A549 (cell line): ENCODE measurements at regions of chr6 and their contacts with region 1.

Region 1: GRCh38 chr6:43506667-43507471 is 3.3 kb downstream of the LRRC73 start:
- DNase-seq: peak; percentile 55 to 83
- ATAC-seq: peak; percentile 62 to 83
- H3K4me3 ChIP-seq: no peak overlapping the region
- H3K27ac ChIP-seq: no peak overlapping the region
- H3K4me1 ChIP-seq: peaks cover 9% of the 10 kb centered on the region
- CTCF ChIP-seq: peak; percentile 79
- EP300 ChIP-seq: no peak
- POLR2A ChIP-seq: no peak
- RAD21 ChIP-seq: peak; percentile 72 to 84

Region 2: DNA sequence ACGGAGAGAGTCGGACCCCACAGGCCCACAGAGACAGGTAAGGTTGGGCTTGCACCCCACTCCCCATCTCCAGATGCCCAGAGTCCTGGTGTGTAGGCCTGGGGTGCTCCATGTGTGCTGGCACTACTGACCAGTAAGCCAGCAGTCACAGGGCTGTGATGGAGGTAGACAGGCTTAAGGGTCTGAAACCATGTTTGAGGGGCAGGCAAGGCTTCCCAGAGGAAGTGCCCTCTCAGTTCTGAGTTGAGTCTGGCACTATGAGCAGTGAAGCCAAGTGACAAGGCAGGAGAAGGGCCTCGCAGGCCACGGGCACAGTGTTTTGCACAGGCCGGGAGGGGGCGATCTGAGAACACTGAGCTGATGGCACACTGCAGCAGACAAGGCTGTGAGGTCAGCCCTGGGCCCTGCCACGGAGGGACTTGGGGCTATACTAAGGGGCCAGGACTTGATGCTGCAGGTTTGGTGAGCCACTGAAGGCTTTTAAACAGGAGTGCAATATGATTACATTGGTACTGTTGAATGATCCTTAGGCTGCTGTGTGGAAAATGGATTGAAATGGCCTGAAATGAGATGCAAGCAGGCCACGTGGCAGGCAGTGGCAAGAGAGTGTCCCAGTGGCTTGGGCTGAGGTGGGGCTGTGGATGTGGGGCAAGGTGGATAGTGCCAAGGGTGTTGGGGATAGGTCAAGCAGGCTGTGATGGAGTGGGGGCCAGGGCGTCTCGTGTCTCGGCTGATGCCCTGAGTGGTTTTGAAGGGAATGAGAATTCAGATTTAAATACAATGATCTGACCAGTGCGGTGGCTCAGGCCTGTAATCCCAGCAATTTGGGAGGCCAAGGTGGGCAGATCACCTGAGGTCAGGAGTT is 243.3 kb before region 1 on chr6:
- CTCF ChIA-PET with region 1: interaction called, 29 read pairs
- POLR2A ChIA-PET with region 1: no interaction called
- DNase-seq: peak; percentile 74 to 86
- ATAC-seq: peak; percentile 96 to 98
- H3K4me3 ChIP-seq: no peak overlapping the region
- H3K27ac ChIP-seq: 0 out of 6 replicates have a peak overlapping the region, but pooled peaks of 1 of the 2 experiments have one; percentile 28
- H3K4me1 ChIP-seq: peaks cover 7% of the 10 kb centered on the region; the same call in 1 of the 3 replicates
- CTCF ChIP-seq: peak; percentile 73
- EP300 ChIP-seq: no peak
- POLR2A ChIP-seq: no peak
- RAD21 ChIP-seq: peak; percentile 87 to 90

Region 3: GRCh38 chr6:43444036-43444435 is 62.8 kb before region 1 on chr6:
- CTCF ChIA-PET with region 1: interaction called, 20 read pairs
- POLR2A ChIA-PET with region 1: no interaction called
- DNase-seq: no peak
- ATAC-seq: peak in 1 of 2 experiments; percentile 17; a peak in 1 of 6 replicates
- H3K4me3 ChIP-seq: no peak overlapping the region
- H3K27ac ChIP-seq: no peak overlapping the region
- H3K4me1 ChIP-seq: no peaks in the 10 kb centered on the region
- CTCF ChIP-seq: no peak
- EP300 ChIP-seq: no peak
- POLR2A ChIP-seq: no peak
- RAD21 ChIP-seq: no peak

Region 4: DNA sequence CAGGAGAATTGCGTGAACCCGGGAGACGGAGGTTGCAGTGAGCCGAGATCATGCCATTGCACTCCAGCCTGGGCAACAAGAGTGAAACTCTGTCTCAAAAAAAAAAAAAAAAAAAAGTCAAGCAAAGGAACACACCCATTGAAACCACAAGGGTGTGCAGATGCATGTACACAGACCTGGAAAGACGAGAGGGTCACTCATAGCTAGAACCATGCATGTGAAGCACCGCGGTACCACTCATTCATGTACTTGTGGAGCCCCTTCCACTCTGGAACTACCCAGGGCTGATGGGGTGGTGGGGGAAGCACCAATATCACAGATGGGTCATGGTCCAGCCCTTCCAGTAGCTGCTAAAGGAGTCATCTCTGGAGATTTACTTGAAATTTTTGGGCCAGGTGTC is 36.9 kb before region 1 on chr6:
- CTCF ChIA-PET with region 1: interaction called, 10 read pairs
- POLR2A ChIA-PET with region 1: no interaction called
- DNase-seq: no peak
- ATAC-seq: no peak
- H3K4me3 ChIP-seq: no peak overlapping the region
- H3K27ac ChIP-seq: no peak overlapping the region
- H3K4me1 ChIP-seq: no peaks in the 10 kb centered on the region
- CTCF ChIP-seq: no peak
- EP300 ChIP-seq: no peak
- POLR2A ChIP-seq: no peak
- RAD21 ChIP-seq: no peak

Region 5: DNA sequence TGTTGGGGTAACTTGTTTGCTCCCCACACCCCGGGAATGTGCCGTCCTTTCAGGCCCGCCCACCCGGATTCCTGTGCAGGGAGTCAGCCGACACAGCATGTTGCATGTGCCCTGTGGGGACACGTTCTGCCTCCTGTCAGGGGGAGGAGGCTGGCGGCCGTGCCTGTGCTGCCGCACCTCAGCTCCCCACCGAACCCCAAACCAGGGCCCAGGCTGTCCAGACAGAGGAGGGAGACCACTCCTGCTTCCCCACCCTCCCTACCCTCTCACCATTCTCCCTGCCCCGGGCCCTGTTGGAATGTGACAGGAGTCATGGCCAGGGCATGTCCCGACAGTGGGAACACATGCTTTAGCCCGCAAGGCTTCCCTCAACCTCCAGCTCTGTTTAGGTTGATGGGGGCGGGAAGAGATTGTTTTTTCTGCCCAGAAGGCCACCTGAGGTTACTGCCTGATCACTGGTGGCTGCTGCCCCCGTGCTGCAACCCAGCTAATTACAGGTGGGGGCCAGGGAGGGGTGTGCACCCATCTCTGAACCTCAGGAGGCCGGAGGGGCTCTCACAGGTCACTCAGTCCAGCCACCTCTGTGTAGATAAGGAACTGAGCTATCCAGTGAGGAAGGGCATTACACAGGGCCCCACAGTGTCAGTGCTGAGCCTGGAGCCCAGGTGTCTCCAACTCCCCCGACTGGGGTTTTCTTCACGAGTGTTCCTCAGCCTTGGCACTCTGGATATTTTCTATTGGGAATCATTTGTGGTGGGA is 10.3 kb before region 1 on chr6:
- CTCF ChIA-PET with region 1: interaction called, 79 read pairs
- POLR2A ChIA-PET with region 1: no interaction called
- DNase-seq: peak; percentile 22 to 52
- ATAC-seq: peak; percentile 68 to 77
- H3K4me3 ChIP-seq: no peak overlapping the region
- H3K27ac ChIP-seq: peak overlapping the region; percentile 15 to 75; a peak in 3 of 6 replicates
- H3K4me1 ChIP-seq: peaks cover 16% of the 10 kb centered on the region
- CTCF ChIP-seq: peak; percentile 27; the same call in 2 of the 3 replicates
- EP300 ChIP-seq: no peak
- POLR2A ChIP-seq: no peak
- RAD21 ChIP-seq: peak; percentile 53 to 65

Region 6: DNA sequence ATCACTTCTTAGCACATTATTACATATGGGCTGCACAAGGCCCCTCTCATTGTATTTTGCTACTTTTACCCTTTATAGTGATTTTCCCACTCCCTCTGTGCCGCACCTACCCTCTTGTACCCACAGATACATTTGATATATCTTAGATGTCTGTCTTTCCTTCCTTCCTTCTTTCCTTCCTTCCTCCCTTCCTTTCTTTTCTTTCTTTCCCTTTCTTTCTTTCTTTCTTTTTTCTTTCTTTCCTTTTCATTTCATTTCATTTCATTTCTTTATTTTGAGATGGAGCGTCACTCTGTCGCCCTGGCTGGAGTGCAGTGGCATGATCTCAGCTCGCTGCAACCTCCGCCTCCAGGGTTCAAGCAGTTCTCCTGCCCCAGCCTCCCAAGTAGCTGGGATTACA is 81.3 kb after region 1 on chr6:
- CTCF ChIA-PET with region 1: no interaction called
- POLR2A ChIA-PET with region 1: no interaction called
- DNase-seq: no peak
- ATAC-seq: no peak
- H3K4me3 ChIP-seq: no peak overlapping the region
- H3K27ac ChIP-seq: no peak overlapping the region
- H3K4me1 ChIP-seq: no peaks in the 10 kb centered on the region
- CTCF ChIP-seq: no peak
- EP300 ChIP-seq: no peak
- POLR2A ChIP-seq: no peak
- RAD21 ChIP-seq: no peak